ENCODE measurements at regions of chr1 and their contacts with region 1.

Region 1: GRCh38 chr1:166910396-166910994 is 34.4 kb upstream of the TADA1 start:
- DNase-seq: peak; percentile 87
- ATAC-seq: peak; percentile 89
- H3K4me3 Mint-ChIP-seq: no peak overlapping the region
- H3K27ac Mint-ChIP-seq: no peak overlapping the region
- H3K4me1 Mint-ChIP-seq: peaks cover 40% of the 10 kb centered on the region
- H3K27me3 Mint-ChIP-seq: peaks cover 17% of the 10 kb centered on the region

Region 2: GRCh38 chr1:166822385-166822784 is 88.1 kb before region 1 on chr1:
- CTCF ChIA-PET with region 1: no interaction called
- POLR2A ChIA-PET with region 1: no interaction called
- DNase-seq: no peak
- ATAC-seq: no peak
- H3K4me3 Mint-ChIP-seq: no peak overlapping the region
- H3K27ac Mint-ChIP-seq: no peak overlapping the region
- H3K4me1 Mint-ChIP-seq: no peaks in the 10 kb centered on the region
- H3K27me3 Mint-ChIP-seq: peaks cover 2% of the 10 kb centered on the region

Region 3: DNA sequence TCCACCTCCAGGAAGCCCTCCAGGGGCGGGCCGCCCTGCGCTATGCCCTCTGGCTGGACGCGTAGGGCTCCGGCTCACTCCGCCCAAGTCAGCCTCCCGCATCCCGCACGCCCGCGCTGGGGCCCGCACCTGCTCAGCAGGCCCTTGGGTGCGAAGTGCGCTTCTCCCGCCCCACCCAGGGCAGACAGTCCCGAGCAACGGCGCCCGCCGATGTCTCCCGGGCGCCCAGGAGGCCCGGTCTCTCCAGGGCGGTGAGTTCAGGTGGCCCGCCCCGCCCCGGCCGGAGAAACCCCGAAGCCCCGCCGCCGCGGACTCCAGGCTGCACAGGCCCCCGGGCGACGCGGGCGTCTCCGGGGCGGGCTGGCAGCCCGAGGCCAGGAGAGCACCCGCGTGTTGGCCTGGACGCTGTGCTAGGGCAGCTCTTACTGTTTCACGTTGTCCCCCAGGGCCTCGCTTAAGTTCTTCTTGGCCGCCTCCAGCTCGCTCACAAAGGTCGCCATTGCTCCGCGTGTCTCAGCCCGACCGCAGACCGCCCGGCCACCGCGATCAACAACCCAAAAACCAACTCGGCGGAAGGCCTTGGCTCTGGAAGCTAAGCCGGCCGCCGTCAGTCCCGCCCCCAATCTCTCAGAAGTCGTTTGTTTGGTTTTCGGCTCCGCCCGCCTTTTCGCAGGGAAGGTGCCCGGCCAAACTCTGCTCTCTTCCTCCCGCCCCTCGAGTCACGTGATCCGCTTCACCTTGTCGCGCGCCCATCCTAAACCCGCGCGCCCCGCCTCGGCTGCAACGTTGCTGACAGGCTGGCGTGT is 34.6 kb before region 1 on chr1 and contains the start of gene TADA1:
- CTCF ChIA-PET with region 1: interaction called, 50 read pairs
- POLR2A ChIA-PET with region 1: interaction called, 9 read pairs
- DNase-seq: peak; percentile 99
- ATAC-seq: peak; percentile 92
- H3K4me3 Mint-ChIP-seq: peak within 1 kb of the TSS; percentile 98
- H3K27ac Mint-ChIP-seq: peak within 1 kb of the TSS; percentile 99
- H3K4me1 Mint-ChIP-seq: peaks cover 46% of the 10 kb centered on the region
- H3K27me3 Mint-ChIP-seq: peaks cover 4% of the 10 kb centered on the region
- total RNA-seq, gene TADA1: 12.9 to 13.6 TPM

Region 4: GRCh38 chr1:166969074-166969677 is 58.7 kb after region 1 on chr1:
- CTCF ChIA-PET with region 1: interaction called, 13 read pairs
- POLR2A ChIA-PET with region 1: no interaction called
- DNase-seq: peak; percentile 49
- ATAC-seq: peak; percentile 82
- H3K4me3 Mint-ChIP-seq: no peak overlapping the region
- H3K27ac Mint-ChIP-seq: peak overlapping the region; percentile 10
- H3K4me1 Mint-ChIP-seq: peaks cover 27% of the 10 kb centered on the region
- H3K27me3 Mint-ChIP-seq: peaks cover 35% of the 10 kb centered on the region

Region 5: DNA sequence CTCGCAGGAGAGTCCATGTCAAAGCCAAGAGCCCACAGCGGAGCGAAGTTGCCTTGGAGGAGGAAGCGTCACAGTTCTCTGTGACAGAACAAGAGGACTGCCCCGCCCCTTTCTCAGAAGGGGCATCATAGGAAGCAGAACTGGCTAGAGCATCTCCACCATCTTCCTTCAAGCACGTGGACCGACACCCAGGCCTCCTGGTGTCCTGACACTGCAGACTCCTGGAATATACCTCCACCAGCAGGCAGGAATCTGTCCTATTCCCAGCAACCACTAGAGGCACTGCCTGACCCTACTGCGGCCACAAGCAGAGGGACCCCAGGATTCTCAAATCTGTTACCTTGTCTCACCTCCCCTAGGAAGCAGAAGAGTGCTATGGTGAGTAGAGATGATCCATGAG is 141.9 kb after region 1 on chr1:
- CTCF ChIA-PET with region 1: interaction called, 838 read pairs
- POLR2A ChIA-PET with region 1: interaction called, 3 read pairs
- DNase-seq: no peak
- ATAC-seq: no peak
- H3K4me3 Mint-ChIP-seq: no peak overlapping the region
- H3K27ac Mint-ChIP-seq: no peak overlapping the region
- H3K4me1 Mint-ChIP-seq: no peaks in the 10 kb centered on the region
- H3K27me3 Mint-ChIP-seq: peaks cover under 1% of the 10 kb centered on the region

Region 6: GRCh38 chr1:167220537-167221125 is 310.1 kb after region 1 on chr1 and contains the start of gene POU2F1:
- CTCF ChIA-PET with region 1: interaction called, 16 read pairs
- POLR2A ChIA-PET with region 1: interaction called, 3 read pairs
- DNase-seq: peak; percentile 99
- ATAC-seq: peak; percentile 87
- H3K4me3 Mint-ChIP-seq: peak within 1 kb of the TSS; percentile 91
- H3K27ac Mint-ChIP-seq: peak within 1 kb of the TSS; percentile 95
- H3K4me1 Mint-ChIP-seq: peaks cover 30% of the 10 kb centered on the region
- H3K27me3 Mint-ChIP-seq: no peaks in the 10 kb centered on the region
- total RNA-seq, gene POU2F1: 22.7 to 23.3 TPM

Measured in activated CD8-positive, alpha-beta T cell treated with anti-CD3 and anti-CD28 coated beads, Interleukin-2, amount 10 ng/mL, durations not matched to agents 7 days and 5 days (primary cell).